ENCODE measurements at regions of chr7 and their contacts with region 1.

Region 1: DNA sequence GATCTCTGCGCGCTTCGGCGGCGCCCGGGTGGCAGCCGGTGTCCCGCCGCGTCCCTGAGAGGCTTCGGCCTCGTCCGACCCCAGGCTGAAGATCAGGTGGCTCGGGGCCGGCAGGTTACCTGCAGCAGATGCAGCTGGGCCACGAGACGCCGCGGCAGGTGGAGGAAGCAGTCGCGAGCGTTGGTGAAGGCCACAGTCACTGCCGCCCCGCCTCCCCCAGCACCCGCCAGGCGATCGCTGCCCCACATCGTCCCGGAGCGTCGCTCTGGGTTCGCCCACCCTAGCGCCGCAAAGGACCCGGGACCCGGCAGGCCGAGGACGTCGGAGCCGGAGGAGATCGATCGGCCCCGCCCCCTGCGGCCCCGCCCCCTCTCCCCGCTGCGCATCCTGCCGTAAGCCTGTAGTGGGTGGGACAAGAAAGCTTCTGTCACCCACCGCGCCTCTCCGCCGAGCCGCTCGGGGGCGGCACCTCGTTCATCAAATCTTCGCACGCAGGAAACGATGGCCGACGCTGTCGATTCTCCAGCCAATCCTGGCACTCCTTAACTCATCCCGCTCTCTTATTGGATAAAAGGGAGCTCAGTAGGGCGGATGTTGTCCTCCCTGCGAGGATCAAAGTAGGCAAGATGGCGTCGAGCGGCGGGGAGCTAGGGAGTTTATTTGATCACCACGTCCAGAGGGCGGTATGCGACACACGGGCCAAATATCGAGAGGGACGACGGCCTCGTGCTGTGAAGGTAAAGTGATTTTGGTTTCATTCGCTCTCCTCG is at the starts of genes PEX1 and RBM48:
- DNase-seq: peak; percentile 99
- H3K4me3 ChIP-seq: peak within 1 kb of the TSS; percentile 84
- H3K27ac ChIP-seq: peak within 1 kb of the TSS; percentile 81
- H3K4me1 ChIP-seq: peaks cover 14% of the 10 kb centered on the region
- CTCF ChIP-seq: peak; percentile 78
- total RNA-seq, gene PEX1: 28.3 and 28.7 TPM in 2 replicates
- total RNA-seq, gene RBM48: 7.7 and 10.7 TPM in 2 replicates

Region 2: DNA sequence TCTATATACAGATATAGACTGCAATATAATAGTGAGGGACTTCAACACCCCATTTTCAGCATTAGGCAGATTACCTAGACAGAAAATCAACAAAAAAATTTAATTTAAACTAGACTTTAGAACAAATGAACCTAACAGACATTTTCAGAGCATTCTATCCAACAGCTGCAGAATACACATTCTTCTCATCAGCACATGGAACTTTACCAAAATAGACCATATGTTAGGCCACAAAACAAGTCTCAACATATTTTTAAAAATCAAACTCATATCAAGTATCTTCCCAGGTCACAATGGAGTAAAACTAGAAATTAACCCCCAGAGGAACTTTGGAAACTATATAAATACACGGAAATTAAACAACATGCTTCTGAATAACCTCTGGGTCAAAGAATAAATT is 817.5 kb before region 1 on chr7:
- CTCF ChIA-PET with region 1: no interaction called
- POLR2A ChIA-PET with region 1: no interaction called
- intact Hi-C with region 1: no loop called
- DNase-seq: no peak
- H3K4me3 ChIP-seq: no peak overlapping the region
- H3K27ac ChIP-seq: no peak overlapping the region
- H3K4me1 ChIP-seq: no peaks in the 10 kb centered on the region
- CTCF ChIP-seq: no peak

Region 3: GRCh38 chr7:91826377-91826776 is 702.0 kb before region 1 on chr7:
- CTCF ChIA-PET with region 1: no interaction called
- POLR2A ChIA-PET with region 1: no interaction called
- intact Hi-C with region 1: no loop called
- DNase-seq: no peak
- H3K4me3 ChIP-seq: no peak overlapping the region
- H3K27ac ChIP-seq: no peak overlapping the region
- H3K4me1 ChIP-seq: no peaks in the 10 kb centered on the region
- CTCF ChIP-seq: no peak

Region 4: DNA sequence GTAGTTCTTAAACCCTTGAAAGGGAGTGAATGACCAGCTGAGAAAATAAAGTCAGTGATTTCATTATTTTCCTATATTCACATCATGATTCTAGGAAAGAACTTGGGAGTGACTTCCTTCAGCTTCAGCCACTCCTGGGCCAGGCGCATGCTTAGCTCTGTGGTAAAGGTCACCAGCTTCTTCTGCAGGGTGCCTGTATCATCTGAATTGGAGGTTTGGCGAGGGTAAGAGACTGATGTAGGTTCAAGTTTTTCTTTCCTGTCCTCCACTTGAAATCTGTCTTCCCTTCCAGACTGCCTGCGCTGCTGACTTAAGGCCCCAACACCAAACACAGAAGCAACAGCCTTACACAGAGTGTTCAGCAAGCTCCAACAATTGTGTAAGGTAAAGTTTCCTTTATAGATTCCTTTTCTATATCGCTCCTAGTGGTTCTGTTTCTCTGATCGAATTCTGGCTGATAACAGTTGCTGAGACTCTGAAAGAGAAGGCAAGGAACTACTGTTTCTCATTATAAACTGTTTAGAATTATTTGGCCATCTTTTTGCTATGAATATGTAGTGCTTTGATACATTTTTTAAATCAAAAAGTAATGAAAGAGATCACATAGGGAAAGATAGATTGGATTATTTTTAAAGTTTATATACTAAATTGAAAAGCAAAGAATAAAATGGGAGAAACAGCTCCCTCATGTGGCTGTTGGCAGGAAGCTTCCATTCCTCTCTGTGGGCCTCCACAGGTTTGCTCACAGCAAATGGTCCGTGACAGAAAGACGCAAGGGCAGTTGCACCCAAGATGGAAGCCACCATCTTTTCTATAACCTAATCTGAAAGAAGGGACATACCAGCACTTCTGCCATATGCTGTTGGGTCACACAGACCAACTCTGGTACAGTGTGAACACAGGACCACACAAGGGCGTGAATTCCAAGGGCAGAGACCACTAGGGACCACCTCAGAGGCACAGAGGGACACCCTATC is 67.1 kb before region 1 on chr7:
- CTCF ChIA-PET with region 1: no interaction called
- POLR2A ChIA-PET with region 1: no interaction called
- intact Hi-C with region 1: no loop called
- DNase-seq: peak; percentile 67
- H3K4me3 ChIP-seq: no peak overlapping the region
- H3K27ac ChIP-seq: no peak overlapping the region
- H3K4me1 ChIP-seq: no peaks in the 10 kb centered on the region
- CTCF ChIP-seq: peak; percentile 97

Region 5: GRCh38 chr7:92547579-92547978 is 19.2 kb after region 1 on chr7:
- CTCF ChIA-PET with region 1: interaction called, 3 read pairs
- POLR2A ChIA-PET with region 1: interaction called, 10 read pairs
- intact Hi-C with region 1: no loop called
- DNase-seq: no peak
- H3K4me3 ChIP-seq: no peak overlapping the region
- H3K27ac ChIP-seq: no peak overlapping the region
- H3K4me1 ChIP-seq: no peaks in the 10 kb centered on the region
- CTCF ChIP-seq: no peak

Region 6: DNA sequence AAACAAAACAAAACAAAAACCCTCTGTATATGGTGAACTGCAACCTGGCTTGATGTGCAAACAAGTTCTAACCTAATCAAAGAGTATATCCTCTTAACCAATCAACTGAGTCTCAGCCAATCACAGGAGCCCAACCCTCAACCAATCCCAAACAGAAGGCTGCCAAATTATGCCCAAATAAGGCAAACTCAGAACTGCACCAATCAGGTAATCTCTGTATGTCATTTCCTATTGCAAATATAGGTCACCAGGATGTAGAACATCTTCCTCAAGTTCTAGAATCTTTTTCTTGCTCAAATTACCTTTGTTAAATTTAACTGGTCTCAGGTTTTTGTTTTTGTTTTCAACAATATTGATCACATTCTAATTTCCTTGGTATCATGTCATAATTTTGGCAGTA is 56.6 kb after region 1 on chr7:
- CTCF ChIA-PET with region 1: interaction called, 5 read pairs
- POLR2A ChIA-PET with region 1: interaction called, 6 read pairs
- intact Hi-C with region 1: loop called (anchors 5 kb)
- DNase-seq: no peak
- H3K4me3 ChIP-seq: no peak overlapping the region
- H3K27ac ChIP-seq: no peak overlapping the region
- H3K4me1 ChIP-seq: peaks cover 36% of the 10 kb centered on the region
- CTCF ChIP-seq: no peak

Region 7: DNA sequence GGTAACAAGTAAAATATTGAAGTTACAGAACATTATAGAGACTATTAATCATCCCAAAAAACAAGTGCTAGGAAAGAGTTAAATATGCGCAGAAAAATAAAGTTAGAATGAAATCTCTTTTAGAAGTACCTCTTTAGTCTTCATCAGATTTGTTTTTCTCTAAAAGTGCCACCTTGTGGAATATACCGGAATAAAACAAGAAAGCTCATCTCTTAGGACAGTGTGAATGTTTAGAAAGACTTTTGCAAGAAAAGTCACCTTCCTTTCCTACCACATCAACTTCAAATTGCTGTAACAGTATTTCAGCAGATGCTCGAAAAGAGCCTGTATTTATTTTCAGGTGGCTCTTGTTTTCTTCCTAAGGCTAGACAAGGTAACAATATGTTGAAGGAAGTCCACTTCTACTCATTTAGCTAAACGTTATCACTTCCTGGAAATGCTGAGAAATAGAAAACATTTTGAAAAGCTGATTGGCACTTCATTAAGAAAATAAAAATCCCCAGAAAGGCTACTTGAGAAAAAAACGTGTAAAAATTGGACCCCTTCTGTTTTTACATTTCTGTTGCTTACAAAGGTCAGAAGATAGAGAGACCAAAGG is 81.6 kb after region 1 on chr7:
- CTCF ChIA-PET with region 1: interaction called, 5 read pairs
- POLR2A ChIA-PET with region 1: interaction called, 4 read pairs
- intact Hi-C with region 1: loop called (anchors 5 kb)
- DNase-seq: peak; percentile 52
- H3K4me3 ChIP-seq: no peak overlapping the region
- H3K27ac ChIP-seq: no peak overlapping the region
- H3K4me1 ChIP-seq: peaks cover 26% of the 10 kb centered on the region
- CTCF ChIP-seq: peak; percentile 81

Region 8: DNA sequence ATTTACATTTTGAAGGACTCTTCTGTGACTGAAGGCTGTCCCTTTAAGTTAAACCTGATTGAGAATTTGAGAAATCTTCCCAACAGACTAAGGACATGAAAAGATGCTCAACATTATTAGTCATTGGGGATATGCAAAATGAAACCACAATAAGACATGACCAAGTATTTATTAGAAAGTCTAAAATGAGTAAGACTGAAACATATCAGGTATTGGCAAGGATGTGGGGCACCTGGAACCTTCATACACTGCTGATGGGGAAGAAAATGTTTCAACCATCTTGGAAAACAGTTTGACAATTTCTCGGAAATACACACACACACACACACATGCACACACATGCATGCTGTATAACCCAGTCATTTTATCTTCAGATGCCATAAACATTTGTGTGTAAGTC is 440.1 kb after region 1 on chr7:
- CTCF ChIA-PET with region 1: no interaction called
- POLR2A ChIA-PET with region 1: no interaction called
- intact Hi-C with region 1: no loop called
- DNase-seq: no peak
- H3K4me3 ChIP-seq: no peak overlapping the region
- H3K27ac ChIP-seq: no peak overlapping the region
- H3K4me1 ChIP-seq: no peaks in the 10 kb centered on the region
- CTCF ChIP-seq: no peak

Measured in OCI-LY7 (cell line).